ENCODE measurements at regions of chr18 and their contacts with region 1.

Region 1: DNA sequence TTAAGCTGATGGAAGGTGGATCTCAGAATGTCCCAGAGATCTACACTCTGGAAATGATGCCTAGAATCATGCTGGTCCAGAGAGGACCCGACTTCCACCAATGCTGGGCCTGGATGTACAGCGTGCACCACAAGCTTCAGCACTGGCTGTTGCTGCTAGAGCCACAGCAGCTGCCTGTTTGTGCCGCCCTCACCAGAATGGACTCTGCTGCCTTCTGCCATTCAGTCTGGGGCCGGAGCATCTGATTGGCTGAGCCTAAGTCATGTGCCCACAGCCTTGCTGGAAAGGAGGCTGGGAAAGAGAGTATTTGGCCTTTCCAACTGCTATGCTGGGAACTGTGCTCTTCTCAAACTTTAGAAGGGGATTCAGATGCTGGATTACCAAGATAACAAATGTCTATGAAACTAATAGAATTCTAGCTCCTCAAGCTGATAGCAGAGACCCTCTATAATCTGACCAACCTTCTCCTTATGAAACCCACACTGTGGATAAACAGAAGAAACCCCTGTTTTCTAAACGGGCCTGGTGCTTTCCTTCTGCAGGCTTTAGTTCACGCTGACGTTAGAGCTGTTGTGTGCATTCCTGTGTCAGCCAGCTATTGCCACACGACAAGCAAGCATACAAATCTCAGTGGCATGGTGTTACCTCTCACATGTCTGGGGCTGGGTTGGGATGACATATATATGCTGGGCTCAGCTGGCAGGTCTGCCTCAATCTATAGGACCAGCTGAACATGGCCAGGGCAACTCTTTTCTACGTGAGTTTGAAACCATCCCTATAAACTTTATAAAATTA is 4.1 kb upstream of the LOXHD1 start:
- DNase-seq: no peak
- H3K4me3 ChIP-seq: no peak overlapping the region
- H3K27ac ChIP-seq: no peak overlapping the region
- H3K4me1 ChIP-seq: no peaks in the 10 kb centered on the region
- H3K27me3 ChIP-seq: no peaks in the 10 kb centered on the region
- CTCF ChIP-seq: no peak
- EP300 ChIP-seq: no peak
- POLR2A ChIP-seq: no peak

Region 2: DNA sequence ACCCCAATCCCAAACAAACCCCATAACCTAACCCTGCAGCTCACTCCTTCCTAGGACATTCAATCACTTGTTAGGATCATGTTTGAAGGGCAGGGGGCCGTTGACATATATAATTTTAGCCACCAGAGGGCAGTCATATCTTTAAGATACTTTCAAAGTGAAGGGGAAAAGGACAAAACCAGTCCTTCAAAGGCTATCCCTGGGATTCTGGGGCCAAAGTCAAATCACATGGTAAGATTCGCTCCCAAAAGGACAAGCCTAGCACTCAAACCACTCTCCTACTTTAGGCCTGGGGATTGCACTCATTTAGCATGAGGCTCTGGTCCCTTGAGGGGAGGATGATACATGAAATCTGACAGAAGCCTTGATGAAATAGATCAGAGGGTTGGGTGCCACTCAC is 512.3 kb before region 1 on chr18:
- in situ Hi-C with region 1: loop called (anchors 5 to 10 kb)
- intact Hi-C with region 1: loop called (anchors 5 kb)
- DNase-seq: peak; percentile 25
- H3K4me3 ChIP-seq: no peak overlapping the region
- H3K27ac ChIP-seq: no peak overlapping the region
- H3K4me1 ChIP-seq: no peaks in the 10 kb centered on the region
- H3K27me3 ChIP-seq: no peaks in the 10 kb centered on the region
- CTCF ChIP-seq: peak; percentile 56 to 71 (median 67)
- EP300 ChIP-seq: no peak
- POLR2A ChIP-seq: no peak

Region 3: DNA sequence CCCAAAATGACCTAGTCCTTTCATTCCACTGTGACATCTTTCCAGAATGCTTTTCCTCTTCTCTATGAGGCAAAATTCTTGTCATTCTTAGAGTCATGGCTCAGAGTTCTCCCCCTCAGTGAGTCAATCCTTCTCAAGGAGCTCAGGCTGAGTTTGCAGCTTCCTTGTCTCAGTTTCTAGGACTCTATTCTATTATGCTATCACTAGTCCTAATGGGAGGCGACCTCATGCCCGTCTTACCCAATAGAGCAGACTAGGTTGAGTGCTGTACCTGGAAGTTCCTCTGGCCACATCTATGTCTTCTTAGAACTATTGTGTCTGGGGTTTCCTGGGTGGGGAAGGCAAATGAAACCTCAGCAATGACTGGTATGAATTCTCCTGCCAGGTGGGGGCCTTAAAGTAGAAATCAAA is 505.5 kb before region 1 on chr18:
- in situ Hi-C with region 1: loop called in 2 of 4 experiments (anchors 10 kb)
- intact Hi-C with region 1: no loop called
- DNase-seq: no peak
- H3K4me3 ChIP-seq: no peak overlapping the region
- H3K27ac ChIP-seq: no peak overlapping the region
- H3K4me1 ChIP-seq: no peaks in the 10 kb centered on the region
- H3K27me3 ChIP-seq: no peaks in the 10 kb centered on the region
- CTCF ChIP-seq: no peak
- EP300 ChIP-seq: no peak
- POLR2A ChIP-seq: no peak

Region 4: GRCh38 chr18:46167971-46168370 is 493.2 kb before region 1 on chr18:
- in situ Hi-C with region 1: loop called in 1 of 4 experiments (anchors 10 kb)
- intact Hi-C with region 1: loop called (anchors 2 kb)
- DNase-seq: peak; percentile 63
- H3K4me3 ChIP-seq: peak overlapping the region in 1 of 4 donors; percentile 22
- H3K27ac ChIP-seq: no peak overlapping the region
- H3K4me1 ChIP-seq: peaks cover 0 to 10% (median 1%) of the 10 kb centered on the region in 4 donors
- H3K27me3 ChIP-seq: no peaks in the 10 kb centered on the region
- CTCF ChIP-seq: no peak
- EP300 ChIP-seq: no peak
- POLR2A ChIP-seq: no peak

Region 5: DNA sequence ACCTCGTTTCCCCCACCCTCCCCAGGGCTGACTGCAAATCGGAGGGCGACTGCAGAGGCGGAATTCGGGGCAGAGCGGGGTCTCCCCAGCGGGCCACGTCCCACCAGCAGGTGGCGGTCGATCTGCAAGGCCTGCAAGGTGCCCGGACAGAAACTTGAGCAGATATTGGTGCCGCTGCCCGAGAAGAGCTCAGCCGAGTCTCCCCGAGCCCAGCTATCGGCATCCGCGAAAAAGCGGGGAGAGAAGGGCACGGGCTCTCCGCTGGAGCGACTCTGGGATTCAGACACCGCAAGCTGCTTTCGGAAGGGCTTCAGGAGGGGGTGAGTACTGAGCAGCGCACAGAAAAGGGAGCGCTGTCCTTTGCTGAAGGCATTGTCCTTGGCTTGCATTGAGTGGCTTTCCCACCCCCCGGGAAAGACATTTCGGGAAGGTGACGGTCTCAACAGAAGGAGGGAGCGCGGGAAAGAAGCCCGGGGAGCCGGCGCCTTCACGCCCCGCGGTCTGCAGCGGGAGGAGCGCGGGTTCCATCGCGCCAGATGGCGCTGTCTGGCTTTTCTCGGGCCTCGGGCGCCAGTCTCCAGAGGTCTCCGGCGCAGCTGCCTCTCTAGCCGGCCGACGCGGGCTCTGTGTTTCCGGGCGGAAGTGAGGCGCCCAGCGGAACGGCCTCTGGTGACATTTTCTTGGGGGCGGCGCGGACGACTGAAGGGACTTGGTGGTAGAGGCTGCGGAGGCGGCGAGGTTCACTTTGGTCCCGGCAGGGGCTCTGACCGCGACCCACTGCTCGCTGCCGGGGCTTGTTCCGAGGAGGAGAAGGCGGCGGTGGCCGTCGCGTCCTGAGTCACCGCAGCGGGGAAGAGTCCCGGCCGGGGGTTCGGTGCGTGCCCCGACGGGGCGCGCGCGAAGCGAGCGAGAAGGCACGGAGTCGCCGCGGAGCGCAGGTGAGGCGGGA is 487.5 kb before region 1 on chr18:
- in situ Hi-C with region 1: loop called in 1 of 4 experiments (anchors 10 kb)
- intact Hi-C with region 1: loop called (anchors 2 kb)
- DNase-seq: peak; percentile 93
- H3K4me3 ChIP-seq: peak overlapping the region; percentile 76 to 97 (median 86)
- H3K27ac ChIP-seq: peak overlapping the region; percentile 88 to 93 (median 90)
- H3K4me1 ChIP-seq: peaks cover 8 to 29% (median 22%) of the 10 kb centered on the region in 4 donors
- H3K27me3 ChIP-seq: no peaks in the 10 kb centered on the region
- CTCF ChIP-seq: peak; percentile 85 to 90 (median 87)
- EP300 ChIP-seq: no peak
- POLR2A ChIP-seq: peak; percentile 72

Region 6: DNA sequence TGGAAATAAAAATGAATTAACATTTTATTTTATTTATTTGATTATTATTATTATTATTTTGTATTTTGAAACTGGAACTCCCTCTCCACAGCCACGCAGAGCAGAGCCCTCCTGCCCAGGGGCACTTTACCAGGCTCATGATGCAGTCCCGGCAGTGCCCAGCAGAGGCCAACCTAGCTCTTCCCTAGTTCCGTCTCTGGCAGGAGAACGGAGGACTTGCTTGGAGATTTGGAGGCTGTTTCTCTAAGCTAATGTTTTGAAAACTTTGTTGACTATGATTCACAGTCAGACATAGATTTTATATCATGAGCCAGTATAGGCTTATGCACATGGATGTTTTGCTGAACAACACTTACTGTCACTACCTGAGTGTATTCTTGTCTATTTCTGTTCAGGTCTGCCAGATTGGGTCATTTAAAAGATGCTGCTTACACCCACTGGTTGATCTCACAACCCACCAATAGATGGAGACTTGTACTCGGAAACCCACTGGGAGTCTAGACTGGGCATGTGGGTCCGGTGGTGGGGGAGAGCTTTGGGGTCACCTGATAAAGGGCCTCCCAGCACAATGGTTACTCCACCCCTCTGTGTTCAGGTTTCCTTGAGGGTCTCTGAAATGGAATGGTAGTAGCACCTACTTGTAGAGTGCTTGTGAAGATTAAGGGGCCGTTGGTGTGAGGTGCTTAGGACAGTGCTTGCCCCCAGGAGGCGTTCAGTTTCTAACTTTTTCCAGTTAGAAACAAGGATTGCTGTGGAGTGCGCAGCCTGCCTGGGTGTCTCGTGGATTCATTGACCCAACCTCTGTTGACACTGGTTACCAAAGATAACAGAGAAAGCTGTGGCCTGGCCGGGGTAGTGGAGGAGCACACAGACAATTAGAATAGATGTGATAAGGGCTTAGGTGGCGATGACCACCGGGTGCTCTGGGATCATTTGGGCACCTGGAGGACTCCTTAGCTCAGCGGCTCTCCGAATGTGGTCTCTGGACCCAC is 379.7 kb before region 1 on chr18:
- in situ Hi-C with region 1: loop called (anchors 10 to 25 kb)
- intact Hi-C with region 1: loop called (anchors 5 kb)
- DNase-seq: peak; percentile 44
- H3K4me3 ChIP-seq: no peak overlapping the region
- H3K27ac ChIP-seq: no peak overlapping the region
- H3K4me1 ChIP-seq: no peaks in the 10 kb centered on the region
- H3K27me3 ChIP-seq: no peaks in the 10 kb centered on the region
- CTCF ChIP-seq: peak; percentile 79 to 91 (median 85)
- EP300 ChIP-seq: no peak
- POLR2A ChIP-seq: no peak

Region 7: DNA sequence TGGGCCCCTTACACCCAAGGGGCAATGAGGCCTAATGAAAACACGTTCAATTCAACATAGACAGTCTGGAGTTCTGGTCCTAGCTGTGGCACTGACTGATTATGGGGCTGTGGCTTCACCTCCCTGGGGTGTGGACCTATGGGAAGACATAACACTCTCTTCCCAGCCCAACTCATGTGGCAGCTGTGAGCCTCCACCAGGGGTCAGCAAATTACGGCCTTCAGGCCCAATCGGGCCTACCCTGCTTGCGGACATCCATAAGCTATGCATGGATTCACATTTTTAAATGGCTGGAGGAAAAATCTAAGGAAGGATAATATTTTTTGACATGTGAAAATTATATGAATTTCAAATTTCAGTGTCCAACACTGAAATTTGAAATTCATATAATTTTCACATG is 105.4 kb before region 1 on chr18:
- in situ Hi-C with region 1: loop called in 1 of 4 experiments (anchors 25 kb)
- intact Hi-C with region 1: no loop called
- DNase-seq: no peak
- H3K4me3 ChIP-seq: no peak overlapping the region
- H3K27ac ChIP-seq: no peak overlapping the region
- H3K4me1 ChIP-seq: no peaks in the 10 kb centered on the region
- H3K27me3 ChIP-seq: no peaks in the 10 kb centered on the region
- CTCF ChIP-seq: peak in 1 of 5 experiments; percentile 8
- EP300 ChIP-seq: no peak
- POLR2A ChIP-seq: no peak